CD4-positive, alpha-beta memory T cell (primary cell): ENCODE measurements at regions of chr1 and their contacts with region 1.

Region 1: DNA sequence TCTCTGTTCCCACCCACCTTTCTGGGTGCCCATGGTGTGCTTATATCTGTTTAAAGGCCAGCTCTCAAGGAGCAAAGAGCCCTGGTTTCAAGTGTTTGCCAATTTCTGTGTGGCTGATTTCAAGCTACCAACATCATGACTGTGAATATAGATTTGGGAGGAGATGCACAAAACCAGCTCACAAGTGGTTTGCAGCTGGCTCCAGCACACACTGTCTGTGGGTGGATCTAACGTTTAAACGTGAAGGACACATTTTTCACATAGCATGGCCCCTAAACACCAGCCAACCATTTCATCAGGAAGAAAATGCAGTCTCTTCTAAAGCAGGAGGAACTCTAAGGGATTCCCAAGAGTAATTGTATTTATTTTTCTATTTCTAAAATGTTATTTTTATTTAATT is 65.2 kb downstream of the FCRL5 start:
- DNase-seq: no peak
- H3K4me3 ChIP-seq: no peak overlapping the region
- H3K4me3 Mint-ChIP-seq: no peak overlapping the region
- H3K27ac ChIP-seq: no peak overlapping the region
- H3K27ac Mint-ChIP-seq: no peak overlapping the region
- H3K4me1 ChIP-seq: no peaks in the 10 kb centered on the region
- H3K4me1 Mint-ChIP-seq: no peaks in the 10 kb centered on the region
- H3K27me3 ChIP-seq: no peaks in the 10 kb centered on the region
- H3K27me3 Mint-ChIP-seq: peaks cover 9 to 11% of the 10 kb centered on the region in 2 donors

Region 2: DNA sequence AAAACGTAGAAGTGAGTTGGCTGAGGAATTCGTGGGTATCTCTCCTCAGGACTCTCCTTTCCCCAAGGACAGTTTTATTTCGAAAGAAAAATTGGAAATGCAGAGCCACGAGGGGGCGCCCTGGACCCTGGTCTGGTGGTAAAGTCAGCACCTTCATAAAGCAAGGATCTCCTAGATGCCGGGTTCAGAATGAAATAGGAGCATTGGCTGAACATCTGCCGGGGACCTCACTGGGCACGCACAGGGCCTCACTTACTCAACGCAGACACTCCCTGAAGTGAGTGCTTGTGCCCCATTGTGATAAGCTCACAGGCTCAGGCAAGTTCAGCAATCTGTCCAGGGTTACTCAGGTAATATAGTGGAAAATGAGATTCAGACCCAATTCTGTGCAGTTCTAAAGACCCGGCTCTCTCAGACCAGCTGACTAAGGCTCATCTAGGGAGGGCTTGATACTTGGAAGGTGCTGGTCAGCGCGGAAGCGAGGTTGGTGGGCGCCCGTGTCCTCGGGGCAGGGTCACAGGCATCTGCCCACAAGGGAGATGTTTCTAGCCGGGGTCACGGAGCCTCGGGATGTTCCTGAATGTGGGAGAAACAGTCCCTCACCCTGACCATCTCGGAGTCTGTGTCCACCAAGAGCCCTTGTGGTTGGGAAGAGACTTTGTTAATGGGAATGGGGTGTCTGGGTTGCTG is 293.2 kb before region 1 on chr1:
- CTCF ChIA-PET with region 1: no interaction called
- POLR2A ChIA-PET with region 1: no interaction called
- intact Hi-C with region 1: loop called (anchors 2 kb)
- DNase-seq: peak in 2 of 5 donors; percentile 5 to 15
- H3K4me3 ChIP-seq: no peak overlapping the region
- H3K4me3 Mint-ChIP-seq: no peak overlapping the region
- H3K27ac ChIP-seq: no peak overlapping the region
- H3K27ac Mint-ChIP-seq: no peak overlapping the region
- H3K4me1 ChIP-seq: no peaks in the 10 kb centered on the region
- H3K4me1 Mint-ChIP-seq: peaks cover 0 to 5% (median 4%) of the 10 kb centered on the region in 4 donors
- H3K27me3 ChIP-seq: peaks cover 4% of the 10 kb centered on the region
- H3K27me3 Mint-ChIP-seq: peaks cover 22 to 37% of the 10 kb centered on the region in 2 donors

Region 3: DNA sequence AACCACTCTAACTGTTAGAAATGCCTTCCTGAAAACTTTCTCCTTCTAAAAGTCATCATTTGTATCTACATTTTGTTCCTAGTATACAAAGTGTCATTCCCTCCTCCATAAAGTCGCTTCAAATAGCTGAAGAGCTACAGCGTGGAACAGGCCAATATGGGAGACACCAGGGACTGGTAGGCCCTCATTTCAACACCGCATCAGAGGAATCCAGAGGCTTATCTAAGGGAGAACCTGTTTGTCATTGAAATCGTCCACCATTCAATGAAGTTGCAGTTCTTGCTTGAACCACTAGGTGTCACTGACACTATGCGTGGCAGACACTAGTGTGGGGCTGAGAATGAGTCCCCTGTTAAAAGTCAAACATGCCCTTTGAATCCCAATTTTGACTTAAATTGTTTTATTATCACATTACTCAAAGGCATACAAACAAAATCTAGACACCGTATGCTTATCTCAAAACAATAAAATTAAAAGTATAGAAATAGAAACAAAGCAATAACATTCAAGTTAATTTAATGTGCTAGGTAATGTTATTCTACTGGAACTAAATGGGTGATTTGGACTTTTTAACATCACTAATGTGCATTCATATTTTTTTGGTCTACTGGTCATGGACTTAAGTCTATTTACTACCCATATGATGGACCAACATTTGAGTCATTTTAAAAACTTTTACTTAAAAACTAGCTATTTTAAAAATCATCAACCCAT is 117.1 kb before region 1 on chr1:
- CTCF ChIA-PET with region 1: interaction called, 3 read pairs
- POLR2A ChIA-PET with region 1: no interaction called
- intact Hi-C with region 1: loop called (anchors 5 kb)
- DNase-seq: peak in 4 of 5 donors; percentile 14 to 31 (median 18)
- H3K4me3 ChIP-seq: no peak overlapping the region
- H3K4me3 Mint-ChIP-seq: no peak overlapping the region
- H3K27ac ChIP-seq: no peak overlapping the region
- H3K27ac Mint-ChIP-seq: peak overlapping the region in 2 of 7 donors; percentile 7 to 37
- H3K4me1 ChIP-seq: no peaks in the 10 kb centered on the region
- H3K4me1 Mint-ChIP-seq: no peaks in the 10 kb centered on the region
- H3K27me3 ChIP-seq: no peaks in the 10 kb centered on the region
- H3K27me3 Mint-ChIP-seq: peaks cover 0 to 20% of the 10 kb centered on the region in 2 donors